PC-9 (cell line): ENCODE measurements at regions of chr7 and their contacts with region 1.

Region 1: GRCh38 chr7:138691178-138691577 is 10.0 kb downstream of the SVOPL start:
- DNase-seq: no peak
- H3K4me3 ChIP-seq: no peak overlapping the region
- H3K27ac ChIP-seq: no peak overlapping the region
- H3K4me1 ChIP-seq: no peaks in the 10 kb centered on the region
- H3K27me3 ChIP-seq: no peaks in the 10 kb centered on the region
- CTCF ChIP-seq: no peak

Region 2: DNA sequence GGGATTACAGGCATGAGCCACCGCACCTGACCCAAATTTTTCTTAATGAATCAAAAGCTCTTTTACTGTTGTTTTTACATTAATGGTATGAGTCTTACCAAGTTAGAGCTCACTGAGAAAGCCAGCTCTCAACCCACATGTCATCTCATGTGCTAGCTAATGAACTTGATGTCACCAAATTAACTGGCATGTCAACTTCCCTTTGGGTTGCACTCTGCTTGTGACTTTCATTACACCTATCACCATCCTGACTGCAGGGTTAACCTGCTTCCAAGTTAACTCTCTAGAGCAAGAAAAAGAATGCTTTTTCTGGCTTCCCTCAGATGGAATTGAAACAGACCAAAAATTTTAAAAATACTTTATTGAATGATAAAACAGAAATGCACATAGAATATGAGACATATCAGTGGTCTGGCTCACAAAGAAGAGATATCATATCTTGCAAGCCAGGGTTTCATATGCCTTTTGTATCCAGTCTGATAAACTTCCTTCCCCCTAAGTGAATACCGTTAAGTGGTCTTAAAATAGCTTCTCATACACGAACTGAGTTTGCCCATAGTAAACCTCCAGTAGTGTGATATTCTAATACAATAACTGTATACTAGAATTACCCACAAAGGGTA is 274.0 kb before region 1 on chr7:
- CTCF ChIA-PET with region 1: no interaction called
- POLR2A ChIA-PET with region 1: no interaction called
- intact Hi-C with region 1: no loop called
- DNase-seq: no peak
- H3K4me3 ChIP-seq: no peak overlapping the region
- H3K27ac ChIP-seq: no peak overlapping the region
- H3K4me1 ChIP-seq: no peaks in the 10 kb centered on the region
- H3K27me3 ChIP-seq: no peaks in the 10 kb centered on the region
- CTCF ChIP-seq: no peak

Region 3: DNA sequence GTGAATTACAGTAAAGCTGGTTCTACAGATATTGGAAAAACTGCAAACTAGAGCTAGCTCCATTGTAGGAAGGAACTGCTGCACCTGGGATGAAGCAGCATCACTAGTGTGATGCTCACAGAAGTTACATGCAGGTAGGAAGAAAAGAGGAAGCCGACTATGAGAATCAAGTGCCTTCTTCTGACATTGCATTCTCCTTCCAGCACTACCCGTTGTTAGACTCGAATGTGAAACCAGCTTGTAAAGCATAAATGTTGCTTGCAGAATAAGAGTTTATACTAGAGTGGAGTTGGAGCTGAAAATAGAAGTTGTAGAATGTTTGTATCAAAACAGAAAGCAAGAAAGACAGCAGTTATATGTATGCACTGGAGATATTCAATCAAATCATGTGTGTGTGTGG is 181.2 kb before region 1 on chr7:
- CTCF ChIA-PET with region 1: interaction called, 14 read pairs
- POLR2A ChIA-PET with region 1: no interaction called
- intact Hi-C with region 1: no loop called
- DNase-seq: no peak
- H3K4me3 ChIP-seq: no peak overlapping the region
- H3K27ac ChIP-seq: no peak overlapping the region
- H3K4me1 ChIP-seq: no peaks in the 10 kb centered on the region
- H3K27me3 ChIP-seq: no peaks in the 10 kb centered on the region
- CTCF ChIP-seq: no peak

Region 4: GRCh38 chr7:138579136-138579535 is 112.0 kb before region 1 on chr7:
- CTCF ChIA-PET with region 1: no interaction called
- POLR2A ChIA-PET with region 1: interaction called, 18 read pairs
- intact Hi-C with region 1: no loop called
- DNase-seq: no peak
- H3K4me3 ChIP-seq: no peak overlapping the region
- H3K27ac ChIP-seq: no peak overlapping the region
- H3K4me1 ChIP-seq: no peaks in the 10 kb centered on the region
- H3K27me3 ChIP-seq: no peaks in the 10 kb centered on the region
- CTCF ChIP-seq: no peak